Esophagus muscularis mucosa (tissue), 4 donors: ENCODE measurements at regions of chr1 and their contacts with region 1.

Region 1: GRCh38 chr1:84122780-84123382 is 21.2 kb upstream of the PRKACB start:
- DNase-seq: no peak
- H3K4me3 ChIP-seq: no peak overlapping the region
- H3K27ac ChIP-seq: no peak overlapping the region
- H3K4me1 ChIP-seq: peaks cover 0 to 12% (median 3%) of the 10 kb centered on the region in 4 donors
- H3K27me3 ChIP-seq: no peaks in the 10 kb centered on the region
- CTCF ChIP-seq: peak; percentile 68 to 80 (median 71)
- EP300 ChIP-seq: no peak
- POLR2A ChIP-seq: no peak

Region 2: DNA sequence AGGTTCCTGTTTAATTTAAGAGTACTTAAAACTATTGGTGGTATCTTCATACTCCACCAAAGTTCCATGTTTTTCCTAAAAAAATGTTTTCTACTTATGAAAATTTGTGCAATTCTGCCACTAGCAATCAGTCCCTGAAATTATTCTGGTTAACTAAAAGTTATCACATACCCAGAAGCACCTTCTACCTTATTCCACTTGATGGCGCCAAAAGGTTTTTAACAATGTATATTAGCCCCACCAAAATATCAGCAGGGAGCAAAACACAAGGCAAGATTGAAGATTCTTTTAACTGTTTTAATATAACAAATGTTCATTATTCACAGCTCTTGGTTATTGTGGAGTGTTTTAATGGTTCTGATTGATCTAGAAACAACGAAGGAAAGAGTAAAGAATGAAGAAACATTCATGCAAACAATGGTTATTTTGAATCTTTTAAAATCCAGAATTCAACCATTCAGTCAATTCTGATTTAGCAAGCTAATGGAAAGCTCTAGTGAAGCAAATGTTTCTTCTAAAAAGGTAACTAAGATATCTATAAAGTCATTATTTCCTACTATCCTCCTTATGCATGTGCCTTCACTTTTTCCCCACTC is 191.1 kb before region 1 on chr1:
- intact Hi-C with region 1: loop called (anchors 2 kb)
- DNase-seq: no peak
- H3K4me3 ChIP-seq: no peak overlapping the region
- H3K27ac ChIP-seq: no peak overlapping the region
- H3K4me1 ChIP-seq: peaks cover 0 to 16% (median 7%) of the 10 kb centered on the region in 4 donors
- H3K27me3 ChIP-seq: no peaks in the 10 kb centered on the region
- CTCF ChIP-seq: peak; percentile 75 to 82 (median 79)
- EP300 ChIP-seq: no peak
- POLR2A ChIP-seq: no peak